Heart right ventricle (tissue), 16 donors: ENCODE measurements at regions of chr7 and their contacts with region 1.

Region 1: DNA sequence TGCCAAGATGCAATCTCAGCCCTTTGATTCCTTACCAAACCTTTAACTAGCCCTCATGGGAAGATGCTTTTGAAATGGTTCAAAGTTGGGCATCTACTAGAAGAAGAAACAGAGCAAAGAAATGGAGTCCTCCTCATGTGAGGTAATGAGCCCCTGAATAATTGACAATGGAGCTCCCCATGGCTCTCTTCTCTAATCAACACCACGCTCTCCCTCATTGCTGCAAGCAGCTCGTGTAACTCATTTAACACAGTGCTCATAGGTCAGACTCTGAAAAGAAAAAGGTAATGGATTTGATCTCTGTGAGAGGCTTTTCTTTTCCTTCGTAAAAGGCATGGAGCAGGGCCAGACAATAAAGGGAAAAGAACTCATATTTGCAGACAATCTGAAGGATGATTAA is 312.8 kb downstream of the PHTF2 start:
- DNase-seq: no peak
- ATAC-seq: no peak
- H3K4me3 ChIP-seq: no peak overlapping the region
- H3K27ac ChIP-seq: no peak overlapping the region
- H3K4me1 ChIP-seq: no peaks in the 10 kb centered on the region
- H3K27me3 ChIP-seq: no peaks in the 10 kb centered on the region
- CTCF ChIP-seq: no peak

Region 2: DNA sequence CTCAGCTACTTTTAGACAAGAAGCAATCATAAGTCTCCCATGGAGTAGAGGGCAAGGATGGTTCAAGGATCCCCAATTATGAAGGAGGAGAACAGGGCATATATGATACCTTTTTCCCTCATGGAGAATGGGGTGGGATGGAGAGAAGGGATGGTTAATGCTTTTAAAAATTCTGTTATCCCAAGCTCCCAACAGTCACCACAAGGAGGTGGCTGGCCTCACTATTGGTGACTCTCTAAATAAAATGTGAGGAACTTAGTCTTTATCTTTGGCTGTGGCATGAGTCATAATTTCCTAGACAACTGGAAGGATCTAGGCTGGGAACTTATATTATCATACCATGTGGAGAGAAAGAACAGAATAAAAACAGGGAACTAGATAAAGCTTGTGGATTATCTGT is 15.8 kb before region 1 on chr7:
- intact Hi-C with region 1: no loop called
- DNase-seq: no peak
- ATAC-seq: no peak
- H3K4me3 ChIP-seq: no peak overlapping the region
- H3K27ac ChIP-seq: no peak overlapping the region
- H3K4me1 ChIP-seq: no peaks in the 10 kb centered on the region
- H3K27me3 ChIP-seq: no peaks in the 10 kb centered on the region
- CTCF ChIP-seq: no peak

Region 3: GRCh38 chr7:78176171-78176570 is 64.8 kb after region 1 on chr7:
- intact Hi-C with region 1: loop called in 1 of 10 experiments (anchors 10 kb)
- DNase-seq: no peak
- ATAC-seq: peak in 1 of 8 donors; percentile 18
- H3K4me3 ChIP-seq: no peak overlapping the region
- H3K27ac ChIP-seq: no peak overlapping the region
- H3K4me1 ChIP-seq: peaks cover 0 to 18% (median 0%) of the 10 kb centered on the region in 9 donors
- H3K27me3 ChIP-seq: no peaks in the 10 kb centered on the region
- CTCF ChIP-seq: no peak